CD8-positive, alpha-beta T cell (primary cell): ENCODE measurements at regions of chr1 and their contacts with region 1.

Region 1: GRCh38 chr1:68485431-68486022 is 11.4 kb downstream of the DEPDC1 start:
- DNase-seq: no peak
- ATAC-seq: no peak
- H3K4me3 ChIP-seq: no peak overlapping the region
- H3K4me3 Mint-ChIP-seq: no peak overlapping the region
- H3K27ac ChIP-seq: no peak overlapping the region
- H3K27ac Mint-ChIP-seq: no peak overlapping the region
- H3K4me1 ChIP-seq: no peaks in the 10 kb centered on the region
- H3K4me1 Mint-ChIP-seq: no peaks in the 10 kb centered on the region
- H3K27me3 ChIP-seq: no peaks in the 10 kb centered on the region
- H3K27me3 Mint-ChIP-seq: no peaks in the 10 kb centered on the region
- CTCF ChIP-seq: no peak

Region 2: GRCh38 chr1:68293609-68294366 is 191.7 kb before region 1 on chr1:
- CTCF ChIA-PET with region 1: no interaction called
- POLR2A ChIA-PET with region 1: no interaction called
- intact Hi-C with region 1: no loop called
- DNase-seq: no peak
- ATAC-seq: no peak
- H3K4me3 ChIP-seq: no peak overlapping the region
- H3K4me3 Mint-ChIP-seq: no peak overlapping the region
- H3K27ac ChIP-seq: no peak overlapping the region
- H3K27ac Mint-ChIP-seq: no peak overlapping the region
- H3K4me1 ChIP-seq: no peaks in the 10 kb centered on the region
- H3K4me1 Mint-ChIP-seq: no peaks in the 10 kb centered on the region
- H3K27me3 ChIP-seq: no peaks in the 10 kb centered on the region
- H3K27me3 Mint-ChIP-seq: peaks cover 2% of the 10 kb centered on the region
- CTCF ChIP-seq: no peak

Region 3: GRCh38 chr1:68506386-68506785 is 20.9 kb after region 1 on chr1:
- CTCF ChIA-PET with region 1: no interaction called
- POLR2A ChIA-PET with region 1: no interaction called
- intact Hi-C with region 1: loop called in 1 of 2 experiments (anchors 2 kb)
- DNase-seq: no peak
- ATAC-seq: no peak
- H3K4me3 ChIP-seq: no peak overlapping the region
- H3K4me3 Mint-ChIP-seq: no peak overlapping the region
- H3K27ac ChIP-seq: no peak overlapping the region
- H3K27ac Mint-ChIP-seq: no peak overlapping the region
- H3K4me1 ChIP-seq: no peaks in the 10 kb centered on the region
- H3K4me1 Mint-ChIP-seq: peaks cover 1% of the 10 kb centered on the region
- H3K27me3 ChIP-seq: no peaks in the 10 kb centered on the region
- H3K27me3 Mint-ChIP-seq: no peaks in the 10 kb centered on the region
- CTCF ChIP-seq: no peak

Region 4: GRCh38 chr1:68873144-68873543 is 387.6 kb after region 1 on chr1:
- CTCF ChIA-PET with region 1: no interaction called
- POLR2A ChIA-PET with region 1: no interaction called
- intact Hi-C with region 1: no loop called
- DNase-seq: no peak
- ATAC-seq: no peak
- H3K4me3 ChIP-seq: no peak overlapping the region
- H3K4me3 Mint-ChIP-seq: no peak overlapping the region
- H3K27ac ChIP-seq: no peak overlapping the region
- H3K27ac Mint-ChIP-seq: no peak overlapping the region
- H3K4me1 ChIP-seq: no peaks in the 10 kb centered on the region
- H3K4me1 Mint-ChIP-seq: no peaks in the 10 kb centered on the region
- H3K27me3 ChIP-seq: no peaks in the 10 kb centered on the region
- H3K27me3 Mint-ChIP-seq: no peaks in the 10 kb centered on the region
- CTCF ChIP-seq: no peak